ENCODE measurements at regions of chr1 and their contacts with region 1.

Region 1: GRCh38 chr1:14094611-14095400 is 394.8 kb downstream of the PRDM2 start:
- DNase-seq: no peak
- ATAC-seq: no peak
- H3K4me3 ChIP-seq: no peak overlapping the region
- H3K27ac ChIP-seq: no peak overlapping the region
- H3K4me1 ChIP-seq: no peaks in the 10 kb centered on the region
- H3K27me3 ChIP-seq: peaks cover 0 to 2% of the 10 kb centered on the region in 2 donors

Region 2: DNA sequence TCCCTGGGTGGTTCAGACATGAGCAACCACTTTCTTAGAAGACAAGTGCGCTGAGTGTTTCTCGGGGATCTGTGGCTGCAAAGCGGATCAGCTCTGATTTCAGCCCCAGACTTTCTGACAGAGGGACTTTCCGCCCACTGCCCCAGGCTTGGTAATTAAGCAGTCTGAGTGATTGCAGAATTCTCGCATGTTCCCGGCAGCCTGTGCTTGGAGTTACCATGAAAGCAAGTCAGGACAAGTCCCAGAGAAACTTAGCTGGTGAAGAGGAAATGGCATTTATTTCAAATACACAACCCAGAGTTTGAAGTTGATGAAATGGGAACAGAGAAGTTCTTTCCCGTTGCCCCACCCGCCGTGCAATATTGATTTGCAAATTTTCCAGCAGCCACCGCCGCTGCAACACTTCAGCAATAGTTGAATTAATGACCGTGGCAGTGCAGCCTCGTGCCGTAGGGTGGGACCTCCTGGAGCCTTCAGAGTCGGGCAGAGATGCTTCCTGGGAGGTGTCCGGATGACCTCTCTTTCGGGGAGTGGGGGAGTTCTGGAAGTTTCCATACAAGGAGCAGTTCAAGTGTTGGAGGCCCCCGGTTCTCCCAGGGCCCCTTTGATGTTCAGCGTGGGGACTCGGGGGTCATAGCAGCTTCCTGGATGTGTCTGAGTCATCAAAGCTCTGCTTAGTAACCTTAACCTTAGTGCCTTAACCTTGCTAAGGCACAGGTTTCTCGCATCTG is 638.4 kb after region 1 on chr1:
- intact Hi-C with region 1: loop called in 1 of 2 experiments (anchors 10 kb)
- DNase-seq: no peak
- ATAC-seq: no peak
- H3K4me3 ChIP-seq: no peak overlapping the region
- H3K27ac ChIP-seq: no peak overlapping the region
- H3K4me1 ChIP-seq: no peaks in the 10 kb centered on the region
- H3K27me3 ChIP-seq: no peaks in the 10 kb centered on the region

Measured in aorta (tissue), 5 donors.